Gastrocnemius medialis (tissue), 4 donors: ENCODE measurements at regions of chr4 and their contacts with region 1.

Region 1: GRCh38 chr4:48329976-48330375 is 11.4 kb upstream of the SLAIN2 start:
- DNase-seq: no peak
- ATAC-seq: no peak
- H3K4me3 ChIP-seq: no peak overlapping the region
- H3K27ac ChIP-seq: peak overlapping the region in 3 of 4 donors; percentile 5 to 83 (median 80)
- H3K4me1 ChIP-seq: peaks cover 11 to 36% of the 10 kb centered on the region in 2 donors
- H3K27me3 ChIP-seq: no peaks in the 10 kb centered on the region
- CTCF ChIP-seq: no peak
- POLR2A ChIP-seq: no peak

Region 2: GRCh38 chr4:48403358-48403757 is 73.4 kb after region 1 on chr4:
- in situ Hi-C with region 1: no loop called
- intact Hi-C with region 1: loop called (anchors 5 kb)
- DNase-seq: no peak
- ATAC-seq: peak in 1 of 2 donors; percentile 11
- H3K4me3 ChIP-seq: no peak overlapping the region
- H3K27ac ChIP-seq: no peak overlapping the region
- H3K4me1 ChIP-seq: peaks cover 14 to 27% of the 10 kb centered on the region in 2 donors
- H3K27me3 ChIP-seq: no peaks in the 10 kb centered on the region
- CTCF ChIP-seq: no peak
- POLR2A ChIP-seq: no peak